ENCODE measurements at regions of chr7 and their contacts with region 1.

Region 1: DNA sequence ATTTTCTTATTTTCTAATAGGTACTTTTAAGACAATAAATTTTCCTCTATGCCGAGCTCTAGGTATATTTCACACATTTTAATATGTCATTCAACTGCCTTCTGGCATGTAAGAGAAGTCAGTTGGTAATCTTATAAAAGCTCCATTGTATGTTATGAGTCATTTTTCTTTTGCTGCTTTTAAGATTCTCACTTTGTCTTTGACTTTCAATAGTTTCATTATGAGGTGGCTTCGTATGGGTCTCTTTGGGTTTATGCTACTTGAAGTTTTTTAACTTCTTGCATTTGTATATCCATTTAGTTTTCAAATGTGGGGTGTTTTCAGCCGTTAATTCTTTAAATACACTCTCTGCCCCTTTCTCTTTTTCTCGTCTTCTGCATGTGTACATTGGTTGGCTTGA is 80.5 kb downstream of the ABCA13 start:
- DNase-seq: no peak
- ATAC-seq: peak; percentile 76
- H3K4me3 Mint-ChIP-seq: no peak overlapping the region
- H3K27ac Mint-ChIP-seq: no peak overlapping the region
- H3K4me1 Mint-ChIP-seq: peaks cover 14% of the 10 kb centered on the region
- H3K27me3 Mint-ChIP-seq: peaks cover 13% of the 10 kb centered on the region

Region 2: GRCh38 chr7:47979145-47979831 is 272.5 kb before region 1 on chr7 and contains the start of gene HUS1:
- CTCF ChIA-PET with region 1: no interaction called
- POLR2A ChIA-PET with region 1: no interaction called
- intact Hi-C with region 1: loop called in 1 of 2 experiments (anchors 10 kb)
- DNase-seq: peak; percentile 95
- ATAC-seq: peak; percentile 98
- H3K4me3 Mint-ChIP-seq: peak within 1 kb of the TSS; percentile 88
- H3K27ac Mint-ChIP-seq: peak within 1 kb of the TSS; percentile 98
- H3K4me1 Mint-ChIP-seq: peaks cover 25% of the 10 kb centered on the region
- H3K27me3 Mint-ChIP-seq: no peaks in the 10 kb centered on the region
- total RNA-seq, gene HUS1: 40.5 to 41.5 TPM

Region 3: GRCh38 chr7:48130658-48131108 is 121.1 kb before region 1 on chr7:
- CTCF ChIA-PET with region 1: no interaction called
- POLR2A ChIA-PET with region 1: no interaction called
- intact Hi-C with region 1: loop called (anchors 2 to 5 kb)
- DNase-seq: no peak
- ATAC-seq: peak; percentile 93
- H3K4me3 Mint-ChIP-seq: no peak overlapping the region
- H3K27ac Mint-ChIP-seq: no peak overlapping the region
- H3K4me1 Mint-ChIP-seq: peaks cover 6% of the 10 kb centered on the region
- H3K27me3 Mint-ChIP-seq: peaks cover 14% of the 10 kb centered on the region

Region 4: GRCh38 chr7:48262606-48263310 is 11.0 kb after region 1 on chr7:
- CTCF ChIA-PET with region 1: no interaction called
- POLR2A ChIA-PET with region 1: no interaction called
- intact Hi-C with region 1: no loop called
- DNase-seq: no peak
- ATAC-seq: no peak
- H3K4me3 Mint-ChIP-seq: no peak overlapping the region
- H3K27ac Mint-ChIP-seq: no peak overlapping the region
- H3K4me1 Mint-ChIP-seq: no peaks in the 10 kb centered on the region
- H3K27me3 Mint-ChIP-seq: peaks cover 9% of the 10 kb centered on the region